Posterior vena cava (tissue), 2 donors: ENCODE measurements at regions of chr2 and their contacts with region 1.

Region 1: DNA sequence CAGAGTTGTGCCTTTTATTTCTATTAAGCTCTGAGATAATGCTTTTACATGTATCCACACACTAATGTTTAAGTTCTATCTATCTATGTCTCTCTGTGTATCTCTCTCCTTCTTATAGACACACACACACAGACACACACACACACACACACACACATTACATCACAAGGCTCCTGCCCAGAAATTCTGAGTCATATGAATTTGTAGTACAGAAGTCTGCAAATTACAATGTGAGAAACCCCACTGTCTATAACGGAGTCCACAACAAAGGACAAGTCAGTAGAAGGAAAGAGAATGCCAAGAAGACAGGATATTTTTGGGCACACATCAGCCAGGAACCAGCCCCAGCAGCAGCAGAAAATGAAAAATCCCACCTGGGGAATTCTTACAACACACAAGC is 142.4 kb downstream of the EN1 start:
- DNase-seq: no peak

Region 2: DNA sequence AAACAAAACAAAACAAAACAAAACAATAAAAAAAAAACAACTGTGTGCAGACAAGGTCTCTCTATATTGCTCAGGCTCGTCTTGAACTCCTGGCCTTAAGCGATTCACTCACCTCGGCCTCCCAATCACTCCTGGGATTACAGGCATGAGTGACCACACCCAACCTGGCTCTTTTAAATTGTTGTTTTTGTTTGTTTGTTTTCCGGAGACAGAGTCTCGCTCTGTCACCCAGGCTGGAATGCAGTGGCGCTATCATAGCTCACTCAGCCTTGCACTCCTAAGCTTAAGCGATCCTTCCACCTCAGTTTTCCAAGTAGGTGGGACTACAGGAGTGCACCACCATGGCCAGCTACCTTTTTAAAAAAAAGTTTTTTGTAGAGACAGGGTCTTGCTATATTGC is 59.1 kb before region 1 on chr2:
- intact Hi-C with region 1: loop called in 1 of 2 experiments (anchors 2 kb)
- DNase-seq: no peak

Region 3: GRCh38 chr2:118842661-118843482 is 137.8 kb after region 1 on chr2:
- intact Hi-C with region 1: no loop called
- DNase-seq: no peak